Activated CD4-positive, alpha-beta memory T cell treated with anti-CD3 and anti-CD28 coated beads for 36 hours (primary cell): ENCODE measurements at regions of chr11 and their contacts with region 1.

Region 1: GRCh38 chr11:75280227-75280701 is 39.7 kb downstream of the TPBGL start:
- DNase-seq: peak; percentile 83
- H3K4me3 Mint-ChIP-seq: no peak overlapping the region
- H3K27ac Mint-ChIP-seq: peak overlapping the region; percentile 47
- H3K4me1 Mint-ChIP-seq: peaks cover 28% of the 10 kb centered on the region
- H3K27me3 Mint-ChIP-seq: no peaks in the 10 kb centered on the region

Region 2: GRCh38 chr11:75263944-75264349 is 16.3 kb before region 1 on chr11:
- CTCF ChIA-PET with region 1: interaction called, 13 read pairs
- POLR2A ChIA-PET with region 1: no interaction called
- intact Hi-C with region 1: no loop called
- DNase-seq: peak; percentile 49
- H3K4me3 Mint-ChIP-seq: no peak overlapping the region
- H3K27ac Mint-ChIP-seq: no peak overlapping the region
- H3K4me1 Mint-ChIP-seq: peaks cover 42% of the 10 kb centered on the region
- H3K27me3 Mint-ChIP-seq: no peaks in the 10 kb centered on the region

Region 3: DNA sequence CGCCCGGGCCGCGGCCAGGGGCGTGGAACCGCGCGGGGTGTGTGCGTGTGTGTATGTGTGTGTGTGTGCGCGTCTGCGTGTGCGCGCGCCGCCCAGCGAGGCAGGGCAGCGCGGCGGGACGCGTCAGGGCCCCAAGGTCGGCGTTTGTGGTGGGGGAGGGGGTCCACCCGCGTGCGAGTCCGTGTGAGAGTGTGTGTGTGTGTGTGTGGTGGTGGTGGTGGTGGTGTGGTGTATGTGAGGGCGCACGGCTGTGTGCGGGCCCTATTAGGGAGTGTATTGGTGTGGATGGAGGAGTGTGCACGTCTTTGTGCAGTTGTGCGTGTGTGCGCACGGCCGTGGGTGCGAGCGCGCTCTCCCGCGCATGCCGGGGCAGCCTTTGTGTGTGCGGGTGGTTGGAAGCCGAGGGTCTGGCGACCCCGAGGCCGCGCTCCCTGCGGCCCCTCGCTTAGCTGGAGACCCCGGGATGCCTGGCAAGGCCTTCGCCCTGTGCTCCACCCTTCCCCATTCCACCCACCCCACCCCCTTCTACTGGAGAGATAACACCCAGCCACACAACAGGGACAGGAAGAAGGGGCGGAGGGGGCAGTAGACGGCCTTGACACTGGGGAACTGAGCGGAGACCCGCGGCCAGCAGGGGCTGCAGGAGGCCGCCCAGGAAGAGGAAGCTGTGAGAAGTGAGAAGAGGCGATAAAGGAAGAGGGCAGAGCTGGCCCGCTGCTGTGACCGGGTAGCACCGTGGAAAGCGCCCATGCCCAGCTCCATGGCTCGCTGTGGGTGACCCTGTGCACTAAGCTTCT is 71.7 kb after region 1 on chr11:
- CTCF ChIA-PET with region 1: interaction called, 12 read pairs
- POLR2A ChIA-PET with region 1: no interaction called
- intact Hi-C with region 1: no loop called
- DNase-seq: peak; percentile 65
- H3K4me3 Mint-ChIP-seq: peak overlapping the region; percentile 82
- H3K27ac Mint-ChIP-seq: peak overlapping the region; percentile 81
- H3K4me1 Mint-ChIP-seq: peaks cover 33% of the 10 kb centered on the region
- H3K27me3 Mint-ChIP-seq: no peaks in the 10 kb centered on the region

Region 4: DNA sequence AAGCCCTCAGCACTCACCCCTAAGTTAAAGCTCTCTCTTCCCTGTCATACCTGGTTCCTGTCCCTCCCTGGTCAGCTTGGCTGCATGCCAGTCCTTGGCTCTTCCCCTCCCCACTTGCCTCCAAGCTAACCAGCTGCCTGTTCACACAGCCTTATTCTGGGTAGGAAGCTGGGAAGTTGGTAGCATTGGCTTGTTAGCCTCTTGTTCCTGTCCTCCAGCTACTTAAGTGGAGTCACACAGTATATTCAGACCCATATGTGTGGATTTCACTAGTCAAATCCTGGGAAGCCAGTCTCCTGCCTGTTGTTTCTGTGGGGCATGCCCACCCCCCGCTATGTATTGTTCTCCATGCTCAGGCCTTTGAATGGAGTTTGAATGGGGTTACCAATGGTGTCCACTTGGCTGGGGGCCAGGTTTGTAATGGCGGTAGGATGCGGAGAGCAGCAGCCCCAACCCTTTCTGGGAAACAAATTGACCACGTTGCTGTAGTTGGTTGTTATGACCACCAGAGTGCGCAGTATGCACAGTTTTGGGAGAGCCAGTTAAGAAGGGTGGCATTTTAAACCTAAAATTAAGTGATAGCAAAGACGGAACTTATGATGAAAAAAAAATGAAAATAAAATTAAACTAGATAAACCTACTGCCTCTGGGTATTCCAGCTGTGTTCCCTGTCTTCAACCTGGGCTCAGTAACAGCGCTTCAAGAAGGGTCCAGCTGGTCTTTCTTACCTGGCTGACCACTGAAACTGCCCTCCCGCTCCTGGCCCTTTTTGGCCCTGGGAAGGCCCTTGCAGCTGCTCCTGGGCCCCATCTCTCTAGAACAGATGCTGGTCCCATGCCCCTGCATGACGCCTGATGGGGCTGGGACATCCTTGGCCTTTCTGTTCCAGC is 108.4 kb after region 1 on chr11:
- CTCF ChIA-PET with region 1: interaction called, 435 read pairs
- POLR2A ChIA-PET with region 1: no interaction called
- intact Hi-C with region 1: loop called (anchors 1 kb)
- DNase-seq: peak; percentile 84
- H3K4me3 Mint-ChIP-seq: no peak overlapping the region
- H3K27ac Mint-ChIP-seq: no peak overlapping the region
- H3K4me1 Mint-ChIP-seq: peaks cover 10% of the 10 kb centered on the region
- H3K27me3 Mint-ChIP-seq: peaks cover 6% of the 10 kb centered on the region

Region 5: GRCh38 chr11:75399344-75400145 is 119.3 kb after region 1 on chr11 and contains the start of gene RPS3:
- CTCF ChIA-PET with region 1: interaction called, 11 read pairs
- POLR2A ChIA-PET with region 1: no interaction called
- intact Hi-C with region 1: no loop called
- DNase-seq: peak; percentile 92
- H3K4me3 Mint-ChIP-seq: peak within 1 kb of the TSS; percentile 100
- H3K27ac Mint-ChIP-seq: peak within 1 kb of the TSS; percentile 99
- H3K4me1 Mint-ChIP-seq: peaks cover 39% of the 10 kb centered on the region
- H3K27me3 Mint-ChIP-seq: no peaks in the 10 kb centered on the region
- total RNA-seq, gene RPS3: 4,423 to 4,525 TPM

Region 6: DNA sequence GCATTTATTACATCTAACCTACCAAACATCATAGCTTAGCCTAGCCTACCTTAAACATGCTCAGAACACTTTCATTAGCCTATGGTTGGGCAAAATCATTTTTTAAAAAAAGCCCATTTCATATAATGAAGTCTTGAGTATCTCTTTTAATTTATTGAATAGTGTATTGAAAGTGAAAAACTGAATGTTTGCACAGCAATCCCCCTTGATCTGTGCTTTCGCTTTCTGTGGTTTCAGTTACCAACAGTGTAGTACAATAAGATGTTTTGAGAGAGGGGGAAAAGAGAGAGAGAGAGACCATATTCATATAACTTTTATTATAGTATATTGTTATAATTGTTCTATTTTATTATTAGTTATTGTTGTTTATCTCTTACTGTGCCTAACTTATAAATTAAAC is 397.0 kb after region 1 on chr11:
- CTCF ChIA-PET with region 1: no interaction called
- POLR2A ChIA-PET with region 1: no interaction called
- intact Hi-C with region 1: no loop called
- DNase-seq: no peak
- H3K4me3 Mint-ChIP-seq: no peak overlapping the region
- H3K27ac Mint-ChIP-seq: no peak overlapping the region
- H3K4me1 Mint-ChIP-seq: peaks cover 14% of the 10 kb centered on the region
- H3K27me3 Mint-ChIP-seq: peaks cover 33% of the 10 kb centered on the region